Activated CD8-positive, alpha-beta T cell treated with anti-CD3 and anti-CD28 coated beads, Interleukin-2, amount 10 ng/mL, durations not matched to agents 7 days and 5 days (primary cell): ENCODE measurements at regions of chr22 and their contacts with region 1.

Region 1: GRCh38 chr22:50498322-50498890 is 9.1 kb downstream of the LMF2 start:
- DNase-seq: peak; percentile 83
- ATAC-seq: peak; percentile 93
- H3K4me3 Mint-ChIP-seq: no peak overlapping the region
- H3K27ac Mint-ChIP-seq: no peak overlapping the region
- H3K4me1 Mint-ChIP-seq: peaks cover 2% of the 10 kb centered on the region
- H3K27me3 Mint-ChIP-seq: peaks cover 3% of the 10 kb centered on the region

Region 2: GRCh38 chr22:50244420-50245213 is 253.8 kb before region 1 on chr22 and contains the start of gene TUBGCP6:
- CTCF ChIA-PET with region 1: interaction called, 15 read pairs
- POLR2A ChIA-PET with region 1: interaction called, 3 read pairs
- DNase-seq: peak; percentile 95
- ATAC-seq: peak; percentile 81
- H3K4me3 Mint-ChIP-seq: peak within 1 kb of the TSS; percentile 95
- H3K27ac Mint-ChIP-seq: peak within 1 kb of the TSS; percentile 99
- H3K4me1 Mint-ChIP-seq: peaks cover 41% of the 10 kb centered on the region
- H3K27me3 Mint-ChIP-seq: no peaks in the 10 kb centered on the region
- total RNA-seq, gene TUBGCP6: 53.2 to 58.1 TPM

Region 3: GRCh38 chr22:50469377-50470305 is 28.8 kb before region 1 on chr22:
- CTCF ChIA-PET with region 1: interaction called, 26 read pairs
- POLR2A ChIA-PET with region 1: interaction called, 7 read pairs
- DNase-seq: peak; percentile 99
- ATAC-seq: peak; percentile 75
- H3K4me3 Mint-ChIP-seq: peak overlapping the region; percentile 71
- H3K27ac Mint-ChIP-seq: peak overlapping the region; percentile 95
- H3K4me1 Mint-ChIP-seq: peaks cover 76% of the 10 kb centered on the region
- H3K27me3 Mint-ChIP-seq: no peaks in the 10 kb centered on the region

Region 4: DNA sequence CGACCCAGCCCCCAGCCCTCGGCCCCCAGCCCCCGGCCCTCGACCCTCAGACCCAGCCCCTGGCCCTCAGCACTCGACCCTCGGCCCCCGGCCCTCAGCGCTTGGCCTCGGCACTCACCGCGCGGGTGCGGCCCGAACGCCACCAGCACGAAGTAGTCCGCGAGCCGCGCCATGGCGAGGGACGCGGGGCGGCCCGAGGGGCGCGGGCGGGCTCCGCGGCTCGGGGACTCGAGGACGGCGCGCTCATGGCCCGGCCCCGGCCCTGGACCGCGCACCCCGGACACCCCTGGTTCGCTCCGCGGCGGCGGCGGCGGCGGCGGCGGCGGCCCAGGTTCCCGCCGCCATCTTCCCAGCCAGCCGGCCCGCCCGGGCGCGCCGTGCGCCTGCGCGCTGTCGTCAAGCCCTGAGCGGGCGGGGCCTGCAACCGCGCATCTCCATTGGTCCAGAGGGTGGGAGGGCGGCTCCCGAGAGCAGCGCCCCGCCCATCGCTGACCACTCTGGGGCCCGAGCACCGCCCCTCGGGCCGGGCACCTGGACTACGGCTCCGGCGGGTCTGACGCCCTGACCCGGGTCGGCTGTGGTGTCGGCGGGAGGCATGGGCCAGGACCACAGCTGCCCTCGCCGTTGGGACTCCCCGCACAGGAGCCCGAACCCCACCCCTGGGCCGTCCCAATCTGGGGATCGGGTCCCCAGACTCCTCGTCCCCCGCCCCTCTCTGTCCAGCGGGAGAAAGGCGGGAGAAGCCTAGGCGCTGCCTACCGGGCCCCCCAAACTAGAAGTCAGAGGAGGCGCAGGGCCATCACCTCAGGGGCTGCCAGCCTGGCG is 23.5 kb before region 1 on chr22 and contains the start of gene SBF1:
- CTCF ChIA-PET with region 1: interaction called, 26 read pairs
- POLR2A ChIA-PET with region 1: interaction called, 7 read pairs
- DNase-seq: peak; percentile 91
- ATAC-seq: peak; percentile 76
- H3K4me3 Mint-ChIP-seq: peak within 1 kb of the TSS; percentile 93
- H3K27ac Mint-ChIP-seq: peak within 1 kb of the TSS; percentile 84
- H3K4me1 Mint-ChIP-seq: peaks cover 57% of the 10 kb centered on the region
- H3K27me3 Mint-ChIP-seq: peaks cover 13% of the 10 kb centered on the region
- total RNA-seq, gene SBF1: 177 to 183 TPM

Region 5: GRCh38 chr22:50481440-50482106 is 16.8 kb before region 1 on chr22 and contains the start of gene ADM2:
- CTCF ChIA-PET with region 1: interaction called, 16 read pairs
- POLR2A ChIA-PET with region 1: no interaction called
- DNase-seq: peak; percentile 71
- ATAC-seq: peak; percentile 83
- H3K4me3 Mint-ChIP-seq: peak within 1 kb of the TSS; percentile 73
- H3K27ac Mint-ChIP-seq: peak within 1 kb of the TSS; percentile 63
- H3K4me1 Mint-ChIP-seq: peaks cover 12% of the 10 kb centered on the region
- H3K27me3 Mint-ChIP-seq: peaks cover 21% of the 10 kb centered on the region
- total RNA-seq, gene ADM2: 4.1 to 4.2 TPM